ENCODE measurements at regions of chr14 and their contacts with region 1.

Region 1: GRCh38 chr14:24332268-24332993 is 2.4 kb downstream of the ADCY4 start:
- H3K4me3 Mint-ChIP-seq: peak overlapping the region; percentile 67
- H3K27ac Mint-ChIP-seq: peak overlapping the region; percentile 76
- H3K4me1 Mint-ChIP-seq: peaks cover 97% of the 10 kb centered on the region
- H3K27me3 Mint-ChIP-seq: peaks cover 39% of the 10 kb centered on the region

Region 2: DNA sequence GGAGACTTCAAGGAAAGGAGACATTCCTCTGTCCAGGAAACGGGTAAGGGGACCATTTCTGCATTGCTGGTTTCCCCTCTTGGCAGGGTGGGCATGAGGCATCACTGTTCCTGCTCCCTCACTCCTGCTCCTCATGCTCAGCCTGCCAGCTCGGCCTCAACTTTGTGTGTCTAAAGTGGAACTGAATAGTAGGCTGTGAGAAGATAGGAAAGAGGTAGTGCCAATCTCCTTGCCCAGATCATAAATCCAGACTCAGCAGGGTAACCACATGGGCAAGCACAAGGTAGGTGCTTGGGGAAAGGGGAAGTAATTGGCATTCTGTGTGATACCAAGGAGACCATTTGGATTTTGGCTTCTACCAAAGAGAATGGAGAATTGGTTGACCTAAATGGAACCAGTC is 18.5 kb before region 1 on chr14:
- intact Hi-C with region 1: loop called (anchors 1 kb)
- H3K4me3 Mint-ChIP-seq: peak overlapping the region; percentile 2
- H3K27ac Mint-ChIP-seq: peak overlapping the region; percentile 66
- H3K4me1 Mint-ChIP-seq: peaks cover 99% of the 10 kb centered on the region
- H3K27me3 Mint-ChIP-seq: peaks cover 2% of the 10 kb centered on the region

Region 3: DNA sequence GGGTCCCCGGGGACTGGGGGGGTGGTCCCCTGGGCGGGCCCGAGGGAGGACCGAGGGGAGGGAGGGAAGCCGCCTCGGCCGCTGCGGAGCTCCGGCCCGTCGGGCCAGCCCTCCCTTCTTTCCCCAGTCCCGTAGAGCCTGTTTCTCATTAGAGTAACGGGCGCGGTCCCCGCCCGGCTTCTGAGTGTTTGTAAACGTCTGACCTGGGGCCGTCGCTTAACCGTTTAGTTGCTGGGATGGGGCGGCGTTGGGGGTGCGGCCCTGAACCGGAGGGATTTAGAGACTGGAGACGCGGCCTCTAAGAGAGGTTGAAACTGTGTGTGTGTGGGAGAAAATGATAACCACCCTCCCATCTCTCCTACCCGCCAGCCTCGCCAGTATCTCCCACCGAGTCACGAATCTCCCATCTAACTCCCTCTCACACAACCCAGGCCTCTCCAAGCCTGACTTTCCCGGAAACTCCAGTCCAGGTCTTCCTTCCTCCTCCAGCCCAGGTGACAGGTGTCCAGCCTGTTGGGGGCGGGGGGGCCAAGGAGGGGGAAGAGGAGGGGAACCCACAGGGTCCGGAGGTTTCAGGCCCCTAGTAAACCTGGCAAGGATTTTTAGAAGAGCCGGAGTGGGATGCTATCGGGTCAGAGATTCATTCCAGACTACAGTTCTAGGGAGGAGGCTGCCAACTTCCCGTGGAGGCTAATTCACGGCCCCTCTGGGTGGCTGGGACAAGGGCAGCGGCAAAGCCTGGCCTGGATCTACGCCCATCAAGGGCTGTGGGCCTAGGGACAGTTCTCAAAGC is 34.5 kb after region 1 on chr14:
- intact Hi-C with region 1: loop called (anchors 5 kb)
- H3K4me3 Mint-ChIP-seq: peak overlapping the region; percentile 63
- H3K27ac Mint-ChIP-seq: peak overlapping the region; percentile 40
- H3K4me1 Mint-ChIP-seq: peaks cover 42% of the 10 kb centered on the region
- H3K27me3 Mint-ChIP-seq: peaks cover 57% of the 10 kb centered on the region

Region 4: DNA sequence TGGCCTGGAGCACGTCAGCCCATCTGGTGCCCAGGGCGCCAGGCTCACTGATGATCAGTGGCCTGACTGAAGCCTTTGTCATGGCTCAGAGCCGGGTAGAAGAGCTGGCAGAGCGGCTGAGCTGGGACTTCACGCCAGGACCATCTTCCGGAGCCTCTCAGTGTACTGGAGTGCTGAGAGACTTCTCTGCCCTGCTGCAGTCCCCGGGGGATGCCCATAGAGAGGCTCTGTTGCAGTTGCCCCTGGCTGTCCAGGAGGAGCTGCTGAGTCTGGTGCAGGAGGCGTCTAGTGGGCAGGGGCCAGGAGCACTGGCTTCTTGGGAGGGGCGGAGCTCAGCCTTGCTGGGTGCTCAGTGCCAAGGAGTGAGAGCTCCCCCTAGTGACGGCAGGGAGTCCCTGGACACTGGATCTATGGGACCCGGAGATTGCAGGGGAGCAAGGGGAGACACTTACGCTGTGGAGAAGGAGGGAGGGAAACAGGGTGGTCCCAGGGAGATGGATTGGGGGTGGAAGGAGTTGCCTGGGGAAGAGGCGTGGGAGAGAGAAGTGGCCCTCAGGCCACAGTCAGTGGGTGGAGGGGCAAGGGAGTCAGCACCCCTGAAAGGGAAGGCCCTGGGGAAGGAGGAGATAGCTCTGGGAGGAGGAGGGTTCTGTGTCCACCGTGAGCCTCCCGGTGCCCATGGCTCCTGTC is 99.3 kb after region 1 on chr14:
- intact Hi-C with region 1: loop called (anchors 1 kb)
- H3K4me3 Mint-ChIP-seq: peak overlapping the region; percentile 82
- H3K27ac Mint-ChIP-seq: peak overlapping the region; percentile 97
- H3K4me1 Mint-ChIP-seq: peaks cover 71% of the 10 kb centered on the region
- H3K27me3 Mint-ChIP-seq: peaks cover 7% of the 10 kb centered on the region

Region 5: DNA sequence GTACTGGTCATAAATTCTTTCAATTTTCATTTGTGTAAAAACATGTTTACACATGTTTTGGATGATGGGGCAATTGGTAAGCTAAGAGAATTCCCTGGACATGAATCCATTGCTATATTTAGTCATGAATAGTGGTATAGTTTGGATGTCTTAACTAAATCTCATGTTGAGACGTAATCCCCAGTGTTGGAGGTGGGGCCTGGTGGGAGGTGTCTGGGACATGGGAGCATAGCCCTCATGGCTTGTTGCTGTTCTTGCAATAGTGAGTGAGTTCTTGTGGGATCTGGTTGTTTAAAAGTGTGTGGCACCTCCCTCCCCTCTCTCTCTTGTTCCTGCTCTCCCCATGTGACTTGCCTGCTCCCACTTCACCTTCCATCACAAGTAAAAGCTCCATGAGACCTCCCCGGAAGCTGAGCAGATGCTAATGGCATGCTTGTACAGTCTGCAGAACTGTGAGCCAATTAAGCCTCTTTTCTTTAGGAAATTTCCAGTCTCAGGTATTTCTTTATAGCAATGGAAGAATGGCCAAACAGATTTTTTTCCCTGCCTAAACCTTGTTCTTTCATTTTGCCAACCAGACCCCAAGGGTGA is 210.0 kb after region 1 on chr14:
- intact Hi-C with region 1: no loop called
- H3K4me3 Mint-ChIP-seq: no peak overlapping the region
- H3K27ac Mint-ChIP-seq: no peak overlapping the region
- H3K4me1 Mint-ChIP-seq: no peaks in the 10 kb centered on the region
- H3K27me3 Mint-ChIP-seq: no peaks in the 10 kb centered on the region

Measured in dendritic cell treated with granulocyte-macrophage colony-stimulating factor and Interleukin-4, amounts not matched to agents 40 ng/mL and 50 ng/mL, for 4 days (primary cell).